Right ventricle myocardium superior (tissue), 1 donor: ENCODE measurements at regions of chr12 and their contacts with region 1.

Region 1: DNA sequence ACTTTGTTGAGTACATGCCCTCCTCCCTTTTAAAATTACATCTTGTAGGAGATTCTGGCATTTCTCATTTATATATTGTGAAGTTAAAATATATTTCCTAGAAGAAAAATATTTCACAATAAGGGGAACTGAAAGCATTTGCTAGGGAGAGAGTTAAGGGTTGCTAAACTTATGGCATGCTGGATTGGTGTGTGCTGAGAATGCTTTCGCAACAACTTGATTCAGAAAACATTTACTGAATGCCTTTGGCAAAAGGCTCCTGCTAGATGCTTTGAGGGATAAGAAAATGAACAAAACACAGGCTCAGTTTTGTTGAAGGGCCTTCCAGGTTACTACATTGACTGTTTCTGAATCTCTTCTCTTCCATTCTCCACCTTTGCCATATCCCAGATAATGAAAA is 67.5 kb downstream of the DIP2B start:
- DNase-seq: no peak
- ATAC-seq: peak; percentile 73

Region 2: DNA sequence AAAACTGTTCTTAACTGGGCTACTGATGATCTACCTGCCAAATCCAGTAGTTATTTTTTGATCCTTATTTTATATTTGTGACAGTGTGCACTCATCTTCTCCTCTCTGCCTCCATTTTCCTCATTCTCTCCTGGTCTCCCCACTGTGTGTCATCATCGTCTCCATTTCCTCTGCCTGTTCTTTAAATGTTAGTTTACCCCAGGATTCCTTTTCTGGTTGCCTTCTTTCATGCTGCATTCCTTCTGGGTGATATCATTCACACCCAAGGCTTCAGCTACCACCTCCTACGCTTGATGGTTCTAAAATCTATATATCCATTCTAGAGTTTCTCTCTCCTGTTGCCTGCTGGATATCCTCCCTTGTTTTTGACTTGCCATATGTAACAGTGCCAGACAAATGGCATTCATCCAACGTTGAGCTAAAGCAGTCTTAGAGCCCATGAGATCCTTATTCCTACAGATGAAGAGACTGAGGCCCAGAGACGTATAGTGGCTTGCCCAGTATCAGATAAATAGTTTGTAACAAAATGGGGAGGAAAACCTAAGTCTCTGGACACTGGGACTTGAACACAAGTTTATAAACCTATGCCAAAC is 42.0 kb after region 1 on chr12:
- intact Hi-C with region 1: loop called (anchors 5 kb)
- DNase-seq: no peak
- ATAC-seq: no peak